Activated CD4-positive, alpha-beta memory T cell treated with anti-CD3 and anti-CD28 coated beads for 36 hours (primary cell): ENCODE measurements at regions of chr19 and their contacts with region 1.

Region 1: DNA sequence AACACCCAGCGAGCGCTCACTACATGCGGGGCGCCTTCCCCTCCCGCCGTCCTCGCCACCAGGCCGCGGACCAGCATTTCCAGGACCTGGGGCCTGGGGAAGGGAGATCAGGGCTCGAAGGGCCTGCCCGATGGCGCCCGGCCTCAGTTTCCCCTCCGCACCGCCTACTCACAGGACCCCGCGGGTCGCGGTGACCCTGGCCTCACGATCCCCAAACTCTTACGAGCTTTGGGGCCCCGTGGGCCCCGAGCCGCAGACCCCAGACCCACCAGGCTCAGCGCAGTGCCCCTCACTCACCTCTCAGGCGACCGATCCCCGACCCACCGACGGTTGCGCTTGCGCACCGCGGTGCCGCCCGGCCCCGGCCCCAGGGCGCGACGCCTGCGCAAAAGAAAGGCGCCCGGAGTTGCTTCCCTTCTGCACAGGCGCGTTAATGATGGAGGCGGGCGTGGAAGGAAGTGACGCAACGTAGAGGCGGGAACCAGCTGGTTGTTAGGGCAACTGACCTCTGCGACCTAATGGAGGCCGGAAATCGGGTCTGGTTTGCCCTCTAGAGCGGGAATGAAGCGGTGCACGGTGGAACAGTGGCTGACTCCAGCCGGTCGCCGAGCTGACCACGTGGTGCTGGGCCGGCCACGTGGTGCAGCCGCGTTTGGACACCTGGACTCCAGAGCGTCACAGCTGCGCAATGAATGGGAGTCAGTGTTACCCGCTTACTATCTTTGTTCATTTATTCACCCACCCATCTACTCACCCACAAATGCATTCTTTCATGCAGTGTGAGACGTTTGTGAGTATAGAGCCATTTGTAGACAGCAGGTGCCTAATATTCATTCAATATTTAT is at the start of gene SGTA:
- DNase-seq: peak; percentile 99
- H3K4me3 Mint-ChIP-seq: peak within 1 kb of the TSS; percentile 89
- H3K27ac Mint-ChIP-seq: peak within 1 kb of the TSS; percentile 91
- H3K4me1 Mint-ChIP-seq: peaks cover 57% of the 10 kb centered on the region
- H3K27me3 Mint-ChIP-seq: no peaks in the 10 kb centered on the region
- total RNA-seq, gene SGTA: 45.6 to 46.2 TPM

Region 2: GRCh38 chr19:2427429-2428320 is 355.5 kb before region 1 on chr19 and contains the start of gene TIMM13:
- CTCF ChIA-PET with region 1: no interaction called
- POLR2A ChIA-PET with region 1: no interaction called
- intact Hi-C with region 1: loop called (anchors 1 kb)
- DNase-seq: peak; percentile 97
- H3K4me3 Mint-ChIP-seq: peak within 1 kb of the TSS; percentile 90
- H3K27ac Mint-ChIP-seq: peak within 1 kb of the TSS; percentile 97
- H3K4me1 Mint-ChIP-seq: peaks cover 15% of the 10 kb centered on the region
- H3K27me3 Mint-ChIP-seq: no peaks in the 10 kb centered on the region
- total RNA-seq, gene TIMM13: 69.0 to 72.0 TPM

Region 3: DNA sequence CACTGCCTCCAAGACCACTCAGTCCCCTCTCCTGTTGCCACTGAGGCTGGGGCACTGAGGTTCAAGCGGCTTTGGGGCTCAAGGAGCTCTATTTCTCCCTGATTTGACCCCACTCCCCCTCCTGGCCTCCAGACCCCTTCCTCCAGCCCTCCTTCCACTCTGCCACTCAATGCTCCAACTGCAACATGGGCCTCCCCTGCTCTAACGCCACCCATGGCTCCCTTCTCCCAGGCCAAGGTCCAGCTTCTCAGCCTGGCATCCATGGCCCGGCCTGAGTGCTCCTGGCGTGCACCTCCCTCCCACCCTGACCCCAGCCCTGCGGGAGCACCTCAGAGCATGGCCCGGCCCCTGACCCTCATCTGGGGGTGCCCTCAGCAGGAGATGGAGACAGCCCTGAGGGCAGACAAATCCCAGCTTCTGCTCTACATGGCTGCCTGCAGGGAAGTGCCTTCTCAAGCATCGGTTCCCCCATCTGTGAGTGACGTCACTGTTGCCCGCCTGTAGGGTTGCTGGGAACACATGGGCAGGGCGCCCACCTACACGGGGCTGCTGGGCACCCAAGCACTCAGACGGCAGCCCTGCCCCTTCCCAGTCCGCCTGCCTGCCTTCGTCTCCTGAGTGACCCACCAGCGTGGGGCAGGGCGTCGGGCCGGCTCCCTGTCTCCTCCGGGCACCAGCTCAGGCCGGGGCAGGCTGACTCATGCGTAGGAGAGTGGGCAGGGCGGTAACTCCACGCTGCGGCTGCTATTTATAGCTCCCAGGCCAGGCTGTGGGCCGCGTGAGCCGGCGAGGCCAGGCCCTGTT is 60.4 kb before region 1 on chr19:
- CTCF ChIA-PET with region 1: no interaction called
- POLR2A ChIA-PET with region 1: no interaction called
- intact Hi-C with region 1: no loop called
- DNase-seq: no peak
- H3K4me3 Mint-ChIP-seq: no peak overlapping the region
- H3K27ac Mint-ChIP-seq: no peak overlapping the region
- H3K4me1 Mint-ChIP-seq: no peaks in the 10 kb centered on the region
- H3K27me3 Mint-ChIP-seq: peaks cover 29% of the 10 kb centered on the region

Region 4: DNA sequence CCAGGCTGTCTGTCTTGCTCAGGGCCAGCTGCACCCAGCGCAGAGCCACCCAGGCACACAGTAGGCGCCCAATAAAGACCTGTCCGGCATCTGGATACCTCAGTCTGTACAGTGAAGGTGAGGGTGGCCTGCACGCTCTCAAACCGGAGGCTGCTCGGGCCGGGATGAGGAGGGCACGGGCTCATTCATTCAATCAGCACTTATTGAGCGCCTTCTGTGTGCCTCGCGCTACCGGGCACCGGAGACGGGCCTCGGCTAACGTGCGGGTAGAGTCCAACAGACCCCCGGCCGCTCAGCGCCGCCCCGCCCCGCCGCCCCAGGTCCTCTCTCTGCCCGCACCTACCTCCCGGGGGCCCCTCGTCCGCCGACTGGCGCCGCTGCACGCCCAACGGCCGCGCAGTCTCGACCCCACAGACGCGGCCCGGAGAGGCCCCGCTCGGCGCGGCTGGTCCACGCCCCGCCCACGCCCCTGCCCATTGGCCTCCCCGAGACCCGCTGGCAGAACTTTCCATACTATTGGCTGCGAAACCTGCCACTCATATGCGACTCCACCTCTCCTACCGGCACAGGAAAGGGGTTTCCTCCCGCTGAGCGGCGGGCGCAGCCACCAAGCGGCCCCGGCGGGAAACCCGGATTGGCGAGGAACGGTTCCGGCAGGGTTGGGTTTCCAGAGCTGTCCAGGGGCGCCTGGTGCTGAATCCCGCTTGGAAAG is 43.4 kb before region 1 on chr19 and contains the start of gene SLC39A3:
- CTCF ChIA-PET with region 1: no interaction called
- POLR2A ChIA-PET with region 1: no interaction called
- intact Hi-C with region 1: loop called (anchors 1 kb)
- DNase-seq: peak; percentile 99
- H3K4me3 Mint-ChIP-seq: peak within 1 kb of the TSS; percentile 88
- H3K27ac Mint-ChIP-seq: no peak within 1 kb of the TSS
- H3K4me1 Mint-ChIP-seq: peaks cover 12% of the 10 kb centered on the region
- H3K27me3 Mint-ChIP-seq: peaks cover 9% of the 10 kb centered on the region
- total RNA-seq, gene SLC39A3: 21.0 to 24.0 TPM

Region 5: GRCh38 chr19:2850256-2850925 is 67.2 kb after region 1 on chr19:
- CTCF ChIA-PET with region 1: no interaction called
- POLR2A ChIA-PET with region 1: no interaction called
- intact Hi-C with region 1: no loop called
- DNase-seq: no peak
- H3K4me3 Mint-ChIP-seq: no peak overlapping the region
- H3K27ac Mint-ChIP-seq: peak overlapping the region; percentile 1
- H3K4me1 Mint-ChIP-seq: peaks cover 15% of the 10 kb centered on the region
- H3K27me3 Mint-ChIP-seq: no peaks in the 10 kb centered on the region

Region 6: DNA sequence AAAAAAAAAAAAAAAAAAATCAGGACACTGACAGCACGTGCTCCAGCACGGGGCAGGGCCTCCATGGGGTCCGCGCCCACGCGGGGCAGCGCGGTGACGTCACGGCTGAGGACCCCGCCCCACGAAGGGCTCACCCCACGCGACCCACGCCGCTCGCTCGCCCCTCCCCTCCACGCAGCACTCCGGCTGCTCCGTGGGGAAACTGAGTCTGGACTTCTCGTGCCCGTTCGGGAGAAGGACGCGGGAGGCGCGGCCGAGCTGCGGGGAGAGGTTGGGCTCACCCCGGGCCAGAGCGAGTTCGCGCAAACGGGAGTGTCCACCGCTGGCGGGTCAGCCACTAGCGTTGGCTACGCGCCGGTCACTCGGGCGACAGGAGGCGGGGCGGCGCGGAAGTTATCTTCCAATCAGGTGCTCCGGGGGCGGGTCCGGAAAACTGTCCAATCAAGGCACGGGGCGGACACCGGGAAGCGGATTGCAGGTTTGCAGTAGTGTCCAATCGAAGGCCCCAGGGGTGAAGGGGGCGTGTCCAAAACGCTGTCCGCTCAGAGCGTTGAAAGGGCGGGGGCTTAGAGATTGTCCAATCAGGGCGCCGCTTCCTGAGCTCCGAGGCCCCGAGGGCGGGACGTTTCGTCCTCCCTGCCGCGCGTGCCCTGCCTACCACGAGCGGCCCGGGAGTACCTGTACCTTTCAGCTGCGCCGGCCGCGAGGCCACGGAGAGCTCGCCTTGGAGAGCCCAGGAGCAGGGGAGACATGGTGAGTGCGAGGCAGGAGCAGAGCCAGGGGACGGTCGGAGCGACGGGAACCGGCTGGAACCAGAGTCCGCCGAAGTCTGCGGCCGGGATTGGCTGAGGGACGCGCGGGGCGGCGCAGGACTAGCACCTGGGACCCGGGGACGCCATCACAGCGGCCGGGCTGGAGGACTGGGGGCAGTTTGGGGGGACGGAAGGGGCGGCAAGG is 117.4 kb after region 1 on chr19 and contains the start of gene ZNF57:
- CTCF ChIA-PET with region 1: no interaction called
- POLR2A ChIA-PET with region 1: no interaction called
- intact Hi-C with region 1: loop called (anchors 1 kb)
- DNase-seq: peak; percentile 99
- H3K4me3 Mint-ChIP-seq: peak within 1 kb of the TSS; percentile 98
- H3K27ac Mint-ChIP-seq: peak within 1 kb of the TSS; percentile 84
- H3K4me1 Mint-ChIP-seq: peaks cover 20% of the 10 kb centered on the region
- H3K27me3 Mint-ChIP-seq: no peaks in the 10 kb centered on the region
- total RNA-seq, gene ZNF57: 6.7 to 8.3 TPM

Region 7: GRCh38 chr19:3505598-3506383 is 722.6 kb after region 1 on chr19 and contains the start of gene FZR1:
- CTCF ChIA-PET with region 1: no interaction called
- POLR2A ChIA-PET with region 1: no interaction called
- intact Hi-C with region 1: loop called (anchors 10 kb)
- DNase-seq: peak; percentile 100
- H3K4me3 Mint-ChIP-seq: peak within 1 kb of the TSS; percentile 93
- H3K27ac Mint-ChIP-seq: peak within 1 kb of the TSS; percentile 93
- H3K4me1 Mint-ChIP-seq: peaks cover 43% of the 10 kb centered on the region
- H3K27me3 Mint-ChIP-seq: no peaks in the 10 kb centered on the region
- total RNA-seq, gene FZR1: 43.5 to 46.9 TPM